Psoas muscle (tissue), 8 donors: ENCODE measurements at regions of chr1 and their contacts with region 1.

Region 1: DNA sequence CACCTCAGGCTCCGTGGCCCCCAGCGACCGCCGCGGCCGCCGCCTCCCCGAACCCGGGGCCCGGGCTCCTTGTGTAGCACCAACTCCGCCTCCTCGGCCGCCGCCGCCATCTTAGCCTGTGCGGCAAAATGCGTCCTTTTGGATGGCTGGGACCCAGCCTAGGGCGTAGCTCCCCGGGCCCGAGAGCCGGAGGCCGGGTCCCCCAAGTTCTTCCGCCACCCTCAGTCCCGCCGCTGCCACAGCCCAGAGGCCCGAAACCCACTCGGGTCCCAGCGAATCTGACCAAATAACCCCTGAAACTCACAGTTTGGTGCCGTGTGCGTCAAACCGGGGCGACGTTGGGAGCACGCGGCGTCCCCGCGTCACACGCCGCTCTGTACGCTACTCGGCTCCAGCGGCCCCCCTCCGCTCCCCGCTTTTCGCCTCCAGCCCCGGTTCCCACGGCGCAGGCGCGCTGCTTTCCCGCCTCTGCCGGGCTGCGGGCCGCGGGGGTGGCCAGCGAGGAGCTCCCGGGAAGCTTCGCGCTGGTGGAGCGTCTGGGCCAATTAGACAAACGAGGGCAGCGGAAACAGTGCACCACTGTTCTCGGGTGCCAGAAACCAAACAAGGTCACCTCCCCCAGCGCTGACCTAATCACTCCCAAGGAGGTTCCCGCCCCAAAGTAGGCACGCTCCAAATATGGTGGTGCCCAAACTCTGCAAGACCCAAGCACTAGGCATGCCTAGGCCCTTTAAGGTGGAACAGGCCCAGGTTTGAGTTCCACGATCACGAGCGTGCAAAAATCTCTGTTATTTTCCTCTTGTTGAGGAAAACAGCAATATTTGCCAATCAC is at the start of gene ZNF644:
- DNase-seq: peak; percentile 92 to 95
- ATAC-seq: peak; percentile 91 to 97 (median 95)
- H3K4me3 ChIP-seq: peak within 1 kb of the TSS; percentile 97
- H3K27ac ChIP-seq: peak within 1 kb of the TSS; percentile 99
- H3K4me1 ChIP-seq: peaks cover 23% of the 10 kb centered on the region
- H3K27me3 ChIP-seq: no peaks in the 10 kb centered on the region
- CTCF ChIP-seq: no peak
- total RNA-seq, gene ZNF644: 27.5 to 35.6 (median 34.1) TPM

Region 2: DNA sequence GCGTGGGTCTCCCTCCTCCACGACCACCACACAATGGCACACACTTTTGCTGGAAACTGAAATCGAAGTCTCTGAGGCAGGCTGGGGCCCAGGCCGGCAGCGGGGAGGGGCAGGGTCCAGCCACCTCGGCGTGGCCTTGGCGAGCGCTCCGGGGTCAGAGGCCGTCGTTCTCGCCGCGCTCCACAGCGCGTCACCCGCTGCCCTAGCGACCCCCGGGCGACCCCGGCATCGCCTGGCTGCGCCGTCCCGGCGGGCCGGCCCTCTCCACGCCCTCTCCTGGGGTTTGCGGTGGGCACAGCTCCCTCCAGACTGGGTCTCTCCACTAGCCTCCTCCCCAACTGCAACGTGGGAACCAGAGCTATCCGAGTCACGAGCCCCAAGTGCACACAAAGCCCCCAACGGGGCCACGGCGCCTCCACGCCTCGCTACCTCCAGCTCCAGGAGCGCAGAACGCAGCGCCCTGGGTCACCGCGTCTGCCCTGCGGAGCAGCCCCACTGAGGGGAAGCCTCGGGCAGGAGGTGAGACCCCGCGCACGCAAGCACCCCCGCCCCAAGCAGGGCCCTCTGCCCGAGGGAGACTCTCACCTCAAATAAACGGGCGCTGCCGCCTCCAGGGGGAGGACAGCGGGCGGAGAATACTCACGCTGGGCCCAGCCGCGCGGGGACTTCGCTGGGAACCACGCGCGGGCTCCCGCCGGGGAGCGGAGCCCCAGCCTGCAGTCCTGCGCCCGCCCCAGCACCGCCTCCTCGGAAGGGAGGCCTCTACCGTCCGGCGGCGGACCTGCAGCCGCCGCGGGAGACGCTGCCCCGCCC is 170.8 kb before region 1 on chr1:
- intact Hi-C with region 1: loop called in 1 of 2 experiments (anchors 10 kb)
- DNase-seq: peak; percentile 85 to 91
- ATAC-seq: peak; percentile 96 to 99 (median 98)
- H3K4me3 ChIP-seq: peak overlapping the region; percentile 98
- H3K27ac ChIP-seq: peak overlapping the region; percentile 46
- H3K4me1 ChIP-seq: peaks cover 9% of the 10 kb centered on the region
- H3K27me3 ChIP-seq: no peaks in the 10 kb centered on the region
- CTCF ChIP-seq: peak; percentile 82

Region 3: DNA sequence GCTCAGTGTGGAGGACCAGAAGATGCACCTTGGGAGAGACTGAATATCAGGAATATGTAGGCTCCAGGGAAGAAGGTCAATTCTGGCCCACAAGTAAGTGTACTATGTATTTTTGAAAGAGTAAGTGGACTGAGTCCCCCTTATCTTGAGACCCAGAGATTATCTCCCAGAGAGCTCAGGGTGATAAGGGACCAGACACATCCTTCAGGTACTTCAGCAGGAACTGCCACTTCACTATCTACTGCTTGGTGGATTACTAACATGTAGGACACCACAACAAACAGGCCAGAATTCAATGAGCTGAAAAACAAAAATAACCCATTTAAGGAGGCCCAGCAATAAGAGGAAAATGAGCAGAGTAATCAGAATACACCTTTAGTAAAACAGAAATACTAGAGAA is 119.2 kb before region 1 on chr1:
- intact Hi-C with region 1: loop called in 1 of 2 experiments (anchors 5 kb)
- DNase-seq: no peak
- ATAC-seq: no peak
- H3K4me3 ChIP-seq: no peak overlapping the region
- H3K27ac ChIP-seq: no peak overlapping the region
- H3K4me1 ChIP-seq: no peaks in the 10 kb centered on the region
- H3K27me3 ChIP-seq: no peaks in the 10 kb centered on the region
- CTCF ChIP-seq: no peak